A549 (cell line): ENCODE measurements at regions of chr14 and their contacts with region 1.

Region 1: GRCh38 chr14:94598814-94599652 is 13.2 kb upstream of the SERPINA3 start:
- DNase-seq: peak; percentile 87 to 98
- ATAC-seq: peak; percentile 78 to 88
- H3K4me3 ChIP-seq: 0 out of 3 replicates have a peak overlapping the region, but pooled peaks have one; percentile 7
- H3K27ac ChIP-seq: peak overlapping the region; percentile 97 to 98
- H3K4me1 ChIP-seq: peaks cover 74% of the 10 kb centered on the region
- CTCF ChIP-seq: peak; percentile 23; the same call in 2 of the 3 replicates
- EP300 ChIP-seq: peak; percentile 86 to 93
- POLR2A ChIP-seq: no peak
- RAD21 ChIP-seq: peak; percentile 28 to 50; a peak in 4 of 5 replicates

Region 2: DNA sequence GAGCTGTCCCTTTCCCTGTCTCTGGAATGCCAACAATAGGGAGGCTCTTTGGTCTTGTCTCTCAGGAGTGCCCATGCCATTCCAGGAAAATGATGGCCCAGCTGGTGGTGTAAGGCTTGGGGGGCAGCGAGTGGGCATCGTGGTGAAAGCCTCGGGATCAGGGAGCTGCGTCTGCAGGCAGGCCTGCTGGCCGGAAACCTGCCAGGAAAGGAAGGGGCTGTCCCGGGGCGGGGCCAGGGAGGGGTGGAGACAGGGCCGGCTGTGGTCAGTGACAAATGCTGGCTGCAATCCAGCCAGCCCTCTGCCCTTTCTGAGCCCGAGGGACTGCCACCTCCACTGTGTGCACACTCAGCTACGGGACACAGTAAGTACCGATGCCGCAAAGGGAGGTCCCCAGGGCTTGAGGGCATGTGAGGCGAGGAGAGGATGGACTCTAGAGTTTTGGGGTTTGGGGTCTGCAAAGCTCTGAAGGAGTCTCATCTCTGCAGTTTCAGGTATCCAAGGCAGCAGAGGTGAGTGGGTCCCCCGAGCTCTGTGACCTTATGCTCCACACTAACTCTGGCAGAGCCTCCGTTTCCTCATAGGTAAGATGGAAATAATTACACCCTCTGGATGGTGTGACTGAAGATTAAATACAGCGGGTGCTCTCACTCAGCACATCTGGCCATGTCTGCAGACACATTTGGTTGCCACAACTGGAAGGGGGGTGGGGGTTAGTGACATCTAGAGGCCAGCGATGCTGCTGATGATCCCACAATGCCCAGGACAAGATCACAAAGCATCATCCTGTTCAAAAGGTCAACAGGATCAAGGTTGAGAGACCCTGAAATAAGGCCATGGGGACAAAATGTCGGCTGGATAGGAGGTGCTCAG is 17.7 kb before region 1 on chr14 and contains the start of gene SERPINA5:
- CTCF ChIA-PET with region 1: interaction called, 13 read pairs
- POLR2A ChIA-PET with region 1: interaction called, 6 read pairs
- DNase-seq: no peak
- ATAC-seq: no peak
- H3K4me3 ChIP-seq: no peak within 1 kb of the TSS
- H3K27ac ChIP-seq: no peak within 1 kb of the TSS
- H3K4me1 ChIP-seq: no peaks in the 10 kb centered on the region
- CTCF ChIP-seq: no peak
- EP300 ChIP-seq: no peak
- POLR2A ChIP-seq: no peak
- RAD21 ChIP-seq: no peak
- polyA plus RNA-seq, gene SERPINA5: 0.78 and 1.2 TPM in 2 replicates

Region 3: GRCh38 chr14:94615823-94616570 is 17.0 kb after region 1 on chr14:
- CTCF ChIA-PET with region 1: interaction called, 23 read pairs
- POLR2A ChIA-PET with region 1: interaction called, 14 read pairs
- DNase-seq: no peak
- ATAC-seq: no peak
- H3K4me3 ChIP-seq: no peak overlapping the region
- H3K27ac ChIP-seq: no peak overlapping the region
- H3K4me1 ChIP-seq: peaks cover 21% of the 10 kb centered on the region
- CTCF ChIP-seq: no peak
- EP300 ChIP-seq: no peak
- POLR2A ChIP-seq: no peak
- RAD21 ChIP-seq: no peak